CD14-positive monocyte (primary cell): ENCODE measurements at regions of chr3 and their contacts with region 1.

Region 1: GRCh38 chr3:196144706-196145105 is 62.8 kb upstream of the TFRC start:
- DNase-seq: no peak
- H3K4me3 ChIP-seq: no peak overlapping the region
- H3K4me3 Mint-ChIP-seq: no peak overlapping the region
- H3K27ac ChIP-seq: no peak overlapping the region
- H3K27ac Mint-ChIP-seq: no peak overlapping the region
- H3K4me1 ChIP-seq: peaks cover 18 to 27% of the 10 kb centered on the region in 2 donors
- H3K4me1 Mint-ChIP-seq: peaks cover 31% of the 10 kb centered on the region
- H3K27me3 ChIP-seq: no peaks in the 10 kb centered on the region
- H3K27me3 Mint-ChIP-seq: peaks cover 0 to 7% (median 5%) of the 10 kb centered on the region in 3 donors
- CTCF ChIP-seq: no peak

Region 2: DNA sequence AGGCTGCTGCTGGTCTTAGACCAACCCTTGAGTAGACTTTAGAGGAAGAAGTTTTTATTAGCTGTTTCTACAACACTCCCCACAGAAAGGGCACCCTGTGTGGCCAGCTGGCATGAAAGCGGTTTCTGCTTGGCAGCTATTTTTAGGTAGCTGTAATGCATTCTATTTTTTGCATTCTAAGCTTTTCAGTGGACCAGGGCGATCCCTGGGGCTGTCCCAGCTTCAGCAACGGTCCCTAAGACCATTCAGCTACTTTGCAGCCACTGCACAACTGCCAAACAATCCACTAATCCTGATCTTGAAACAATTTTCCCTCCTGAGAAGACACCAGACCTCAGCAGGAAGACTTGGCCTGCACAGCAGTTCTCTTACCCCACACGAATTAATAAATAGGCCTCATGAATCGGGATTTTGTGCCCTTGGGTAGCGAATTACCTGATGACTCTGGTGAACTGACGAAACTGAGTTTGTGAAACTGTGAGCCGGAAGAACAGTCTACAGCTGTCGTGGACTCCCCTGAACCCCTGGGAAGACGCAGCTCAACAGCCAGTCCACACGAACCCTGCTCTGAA is 48.2 kb before region 1 on chr3:
- intact Hi-C with region 1: loop called in 1 of 2 experiments (anchors 10 kb)
- DNase-seq: peak in 1 of 3 donors; percentile 27
- H3K4me3 ChIP-seq: peak overlapping the region in 1 of 3 experiments; percentile 39
- H3K4me3 Mint-ChIP-seq: no peak overlapping the region
- H3K27ac ChIP-seq: peak overlapping the region; percentile 35 to 70
- H3K27ac Mint-ChIP-seq: peak overlapping the region; percentile 49 to 94 (median 80)
- H3K4me1 ChIP-seq: peaks cover 49 to 61% of the 10 kb centered on the region in 2 donors
- H3K4me1 Mint-ChIP-seq: peaks cover 47% of the 10 kb centered on the region
- H3K27me3 ChIP-seq: no peaks in the 10 kb centered on the region
- H3K27me3 Mint-ChIP-seq: peaks cover 0 to 2% (median 1%) of the 10 kb centered on the region in 3 donors
- CTCF ChIP-seq: no peak